HEK293 (cell line): ENCODE measurements at regions of chr17 and their contacts with region 1.

Region 1: DNA sequence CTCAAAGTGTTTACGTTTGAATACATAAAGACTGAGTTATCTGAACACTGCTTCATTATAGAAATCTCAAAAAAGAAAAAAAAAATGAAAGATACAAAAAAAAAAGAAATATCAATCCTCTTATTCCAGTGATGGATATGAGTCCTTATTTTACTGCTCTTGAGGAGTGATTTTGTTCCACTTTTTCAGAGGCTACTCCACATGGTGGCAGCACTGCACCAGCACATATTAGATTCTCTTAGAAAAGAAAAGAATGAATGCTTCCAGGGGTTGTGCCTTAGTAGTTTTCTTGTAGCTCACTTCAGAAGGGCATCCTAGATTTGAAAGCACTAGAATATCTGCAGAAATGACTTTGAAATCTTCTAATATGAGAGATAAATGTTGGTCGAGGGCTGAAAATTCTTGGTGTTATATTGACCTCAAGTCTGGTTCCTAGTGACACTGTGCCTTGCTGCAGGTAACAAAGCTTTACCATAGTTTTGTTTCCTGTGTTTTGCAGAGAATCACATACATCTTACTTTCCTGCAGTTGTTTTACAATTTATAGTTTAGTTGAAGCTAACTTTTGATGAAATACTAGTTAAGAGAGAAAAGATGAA is 25.9 kb downstream of the AP2B1 start:
- H3K4me3 ChIP-seq: no peak overlapping the region
- H3K27ac ChIP-seq: no peak overlapping the region
- H3K4me1 ChIP-seq: peaks cover 6% of the 10 kb centered on the region
- CTCF ChIP-seq: peak; percentile 44; the same call in 1 of the 2 replicates

Region 2: GRCh38 chr17:35476283-35476820 is 136.7 kb before region 1 on chr17:
- CTCF ChIA-PET with region 1: no interaction called
- POLR2A ChIA-PET with region 1: no interaction called
- H3K4me3 ChIP-seq: no peak overlapping the region
- H3K27ac ChIP-seq: no peak overlapping the region
- H3K4me1 ChIP-seq: no peaks in the 10 kb centered on the region
- CTCF ChIP-seq: no peak

Region 3: GRCh38 chr17:35587074-35587971 is 25.7 kb before region 1 on chr17 and contains the start of gene AP2B1:
- CTCF ChIA-PET with region 1: interaction called, 40 read pairs
- POLR2A ChIA-PET with region 1: interaction called, 4 read pairs
- H3K4me3 ChIP-seq: peak within 1 kb of the TSS; percentile 56
- H3K27ac ChIP-seq: peak within 1 kb of the TSS; percentile 88
- H3K4me1 ChIP-seq: peaks cover 15% of the 10 kb centered on the region; the same call in 1 of the 2 replicates
- CTCF ChIP-seq: peak; percentile 42; the same call in 1 of the 2 replicates

Region 4: GRCh38 chr17:35630530-35631148 is 17.6 kb after region 1 on chr17:
- CTCF ChIA-PET with region 1: interaction called, 15 read pairs
- POLR2A ChIA-PET with region 1: no interaction called
- H3K4me3 ChIP-seq: no peak overlapping the region
- H3K27ac ChIP-seq: no peak overlapping the region
- H3K4me1 ChIP-seq: no peaks in the 10 kb centered on the region
- CTCF ChIP-seq: no peak

Region 5: GRCh38 chr17:35660902-35661301 is 47.9 kb after region 1 on chr17:
- CTCF ChIA-PET with region 1: interaction called, 16 read pairs
- POLR2A ChIA-PET with region 1: no interaction called
- H3K4me3 ChIP-seq: no peak overlapping the region
- H3K27ac ChIP-seq: no peak overlapping the region
- H3K4me1 ChIP-seq: no peaks in the 10 kb centered on the region
- CTCF ChIP-seq: no peak

Region 6: DNA sequence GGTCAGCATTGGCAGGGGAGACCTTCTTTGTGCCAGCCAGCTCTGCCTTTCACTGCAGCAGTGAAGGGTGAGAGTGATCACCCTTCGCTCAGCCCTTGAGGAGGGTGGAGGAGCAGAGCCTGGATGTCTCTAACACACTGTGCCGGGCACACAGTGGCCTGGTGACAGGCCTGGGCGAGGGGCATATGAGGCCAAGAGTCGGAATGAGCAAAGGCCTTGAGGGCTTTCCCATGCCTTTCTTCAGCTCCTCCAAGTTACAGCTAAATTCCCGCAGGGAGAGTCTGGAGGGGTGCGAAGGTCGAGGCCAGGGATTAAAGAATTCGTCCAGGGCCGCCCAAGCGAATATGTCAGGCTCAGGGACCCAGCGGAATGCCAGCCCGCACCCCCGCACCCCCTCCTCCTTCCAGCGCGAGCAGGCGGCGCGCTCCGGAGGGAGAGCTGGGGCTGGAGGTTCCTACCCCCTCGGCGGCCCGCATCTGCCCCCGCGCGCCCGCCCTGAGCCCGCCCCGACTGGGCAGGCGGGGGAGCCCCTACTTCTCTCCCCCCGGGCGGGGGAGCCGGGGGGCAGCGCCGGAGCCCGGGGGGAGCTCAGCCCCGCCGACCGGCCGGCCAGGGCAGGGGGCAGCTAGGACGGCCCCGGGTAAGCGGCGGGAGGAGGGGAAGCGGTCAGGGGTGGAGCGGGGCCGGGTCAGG is 118.4 kb after region 1 on chr17 and contains the start of gene RASL10B:
- CTCF ChIA-PET with region 1: interaction called, 23 read pairs
- POLR2A ChIA-PET with region 1: no interaction called
- H3K4me3 ChIP-seq: peak within 1 kb of the TSS; percentile 38
- H3K27ac ChIP-seq: peak within 1 kb of the TSS; percentile 63; the same call in 1 of the 2 replicates
- H3K4me1 ChIP-seq: peaks cover 28% of the 10 kb centered on the region
- CTCF ChIP-seq: no peak

Region 7: DNA sequence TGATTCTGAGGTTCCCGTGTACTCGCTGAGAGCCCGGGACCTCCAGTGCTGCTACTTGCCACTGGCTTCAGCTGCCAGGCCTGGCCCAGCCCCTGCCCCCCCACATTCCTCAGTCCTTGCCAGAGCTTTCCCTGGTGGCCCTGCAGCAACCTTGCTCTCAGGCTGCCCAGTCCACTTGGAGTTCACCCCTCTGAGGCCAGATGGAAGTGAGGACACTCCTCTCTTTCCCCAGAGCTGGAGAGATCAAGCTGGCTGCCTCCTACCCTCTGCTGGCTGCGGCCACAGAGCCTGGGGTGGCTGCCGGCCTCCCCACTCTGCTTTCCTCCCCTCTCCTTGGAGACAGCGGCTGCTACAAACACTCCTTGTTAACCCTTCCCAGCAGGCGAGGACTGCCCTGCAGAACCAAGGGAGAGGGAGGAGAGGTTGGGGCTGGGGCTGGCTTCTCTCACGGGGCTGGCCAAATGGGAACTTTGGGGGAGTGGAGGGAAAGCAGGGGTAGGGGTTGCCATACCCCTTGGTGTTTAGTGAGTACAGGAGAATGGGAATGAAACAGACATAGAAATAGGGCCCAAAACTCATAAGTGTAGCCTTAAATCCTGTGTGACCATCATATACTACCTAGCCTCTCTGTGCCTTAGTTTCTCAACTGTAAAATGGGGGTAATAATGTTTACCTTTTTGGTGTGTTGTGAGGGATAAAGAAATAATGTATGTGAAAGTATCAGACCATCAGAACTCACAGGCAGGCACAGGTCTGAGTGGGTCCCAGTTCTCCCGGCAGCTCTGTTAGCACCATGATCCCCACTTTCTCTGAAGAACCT is 140.1 kb after region 1 on chr17 and contains the start of gene GAS2L2:
- CTCF ChIA-PET with region 1: interaction called, 321 read pairs
- POLR2A ChIA-PET with region 1: no interaction called
- H3K4me3 ChIP-seq: no peak within 1 kb of the TSS
- H3K27ac ChIP-seq: no peak within 1 kb of the TSS
- H3K4me1 ChIP-seq: no peaks in the 10 kb centered on the region
- CTCF ChIP-seq: no peak